ENCODE measurements at regions of chr20 and their contacts with region 1.

Region 1: GRCh38 chr20:44866703-44867335 is 18.7 kb upstream of the YWHAB start:
- DNase-seq: no peak
- ATAC-seq: no peak
- H3K4me3 ChIP-seq: peak overlapping the region in 1 of 4 donors; percentile 25
- H3K27ac ChIP-seq: no peak overlapping the region
- H3K4me1 ChIP-seq: peaks cover 2 to 12% of the 10 kb centered on the region in 2 donors
- H3K27me3 ChIP-seq: no peaks in the 10 kb centered on the region
- CTCF ChIP-seq: no peak
- POLR2A ChIP-seq: no peak

Region 2: DNA sequence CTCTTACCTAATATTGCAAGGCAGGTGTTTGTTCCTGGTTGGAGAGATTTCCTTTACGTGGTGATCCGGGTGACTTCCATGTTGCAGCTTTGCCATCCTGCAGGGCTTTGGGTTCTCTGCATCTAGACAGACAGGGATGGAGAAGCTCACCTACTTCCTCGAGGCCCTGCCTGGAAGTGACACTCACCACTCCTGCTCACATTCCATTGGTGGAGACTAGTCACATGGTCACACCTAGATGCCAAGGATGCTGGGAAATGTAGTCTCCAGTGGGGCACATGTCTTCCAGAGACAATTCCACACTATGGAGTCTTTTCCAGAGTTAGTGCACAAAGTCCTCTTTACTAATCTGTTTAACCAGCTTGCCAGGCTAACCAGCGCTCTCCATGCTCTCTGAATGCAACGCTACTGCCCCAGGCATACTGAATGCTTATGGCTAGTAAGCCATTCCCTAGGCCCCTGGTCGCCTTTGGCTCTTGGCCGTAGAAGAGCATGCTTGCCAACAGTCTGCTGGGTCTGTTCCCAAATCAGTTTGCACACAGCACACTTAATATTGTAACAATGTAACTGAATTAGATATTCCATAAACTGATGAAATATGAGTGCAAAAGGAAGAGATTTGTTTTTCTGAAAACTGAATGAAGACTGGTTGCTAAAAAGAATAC is 127.9 kb before region 1 on chr20:
- in situ Hi-C with region 1: loop called in 3 of 4 experiments (anchors 5 to 10 kb)
- intact Hi-C with region 1: no loop called
- DNase-seq: peak in 1 of 2 donors; percentile 69
- ATAC-seq: peak; percentile 44 to 60
- H3K4me3 ChIP-seq: no peak overlapping the region
- H3K27ac ChIP-seq: peak overlapping the region; percentile 70 to 79 (median 76)
- H3K4me1 ChIP-seq: peaks cover 15% of the 10 kb centered on the region in 2 donors
- H3K27me3 ChIP-seq: no peaks in the 10 kb centered on the region
- CTCF ChIP-seq: no peak
- POLR2A ChIP-seq: no peak

Region 3: DNA sequence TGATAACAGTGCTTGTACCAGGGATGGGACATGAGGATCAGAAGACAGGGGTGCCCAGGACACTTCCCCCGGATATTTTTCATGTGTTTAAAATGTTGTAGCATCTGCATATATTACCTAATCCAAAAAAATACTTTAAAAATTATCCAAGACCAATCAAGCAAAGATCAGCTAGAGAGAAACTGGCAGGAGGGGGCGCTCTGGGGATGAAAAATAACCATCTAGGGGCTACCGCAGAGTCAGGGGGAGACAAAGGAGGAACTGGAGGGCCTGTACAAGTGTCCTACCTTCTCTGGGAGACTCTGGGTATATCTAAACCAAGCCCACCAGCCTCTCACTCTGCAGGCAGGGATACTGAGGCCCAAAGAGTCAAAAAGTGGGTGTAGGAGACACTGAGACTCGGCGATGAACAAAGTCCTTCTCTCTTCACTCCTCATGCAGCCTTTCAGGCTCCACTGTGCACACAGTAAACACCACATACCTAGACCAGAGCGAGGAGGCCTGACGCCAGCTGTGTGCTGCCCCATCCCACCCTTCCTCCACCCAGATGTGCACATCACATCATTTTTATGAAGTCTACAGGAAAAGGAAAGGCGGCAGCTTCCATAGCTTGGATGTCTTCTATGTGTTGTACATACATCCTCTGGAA is 66.3 kb before region 1 on chr20:
- in situ Hi-C with region 1: no loop called
- intact Hi-C with region 1: loop called (anchors 5 kb)
- DNase-seq: no peak
- ATAC-seq: no peak
- H3K4me3 ChIP-seq: no peak overlapping the region
- H3K27ac ChIP-seq: no peak overlapping the region
- H3K4me1 ChIP-seq: peaks cover under 1 to 12% of the 10 kb centered on the region in 2 donors
- H3K27me3 ChIP-seq: no peaks in the 10 kb centered on the region
- CTCF ChIP-seq: no peak
- POLR2A ChIP-seq: no peak

Region 4: GRCh38 chr20:45470262-45470931 is 603.6 kb after region 1 on chr20:
- in situ Hi-C with region 1: no loop called
- intact Hi-C with region 1: no loop called
- DNase-seq: no peak
- ATAC-seq: peak in 1 of 2 donors; percentile 27
- H3K4me3 ChIP-seq: peak overlapping the region; percentile 30 to 52 (median 49)
- H3K27ac ChIP-seq: no peak overlapping the region
- H3K4me1 ChIP-seq: peaks cover 0 to 18% of the 10 kb centered on the region in 2 donors
- H3K27me3 ChIP-seq: peaks cover 31 to 43% (median 38%) of the 10 kb centered on the region in 3 donors
- CTCF ChIP-seq: no peak
- POLR2A ChIP-seq: no peak

Measured in gastrocnemius medialis (tissue), 4 donors.